Naive thymus-derived CD4-positive, alpha-beta T cell (primary cell): ENCODE measurements at regions of chr14 and their contacts with region 1.

Region 1: DNA sequence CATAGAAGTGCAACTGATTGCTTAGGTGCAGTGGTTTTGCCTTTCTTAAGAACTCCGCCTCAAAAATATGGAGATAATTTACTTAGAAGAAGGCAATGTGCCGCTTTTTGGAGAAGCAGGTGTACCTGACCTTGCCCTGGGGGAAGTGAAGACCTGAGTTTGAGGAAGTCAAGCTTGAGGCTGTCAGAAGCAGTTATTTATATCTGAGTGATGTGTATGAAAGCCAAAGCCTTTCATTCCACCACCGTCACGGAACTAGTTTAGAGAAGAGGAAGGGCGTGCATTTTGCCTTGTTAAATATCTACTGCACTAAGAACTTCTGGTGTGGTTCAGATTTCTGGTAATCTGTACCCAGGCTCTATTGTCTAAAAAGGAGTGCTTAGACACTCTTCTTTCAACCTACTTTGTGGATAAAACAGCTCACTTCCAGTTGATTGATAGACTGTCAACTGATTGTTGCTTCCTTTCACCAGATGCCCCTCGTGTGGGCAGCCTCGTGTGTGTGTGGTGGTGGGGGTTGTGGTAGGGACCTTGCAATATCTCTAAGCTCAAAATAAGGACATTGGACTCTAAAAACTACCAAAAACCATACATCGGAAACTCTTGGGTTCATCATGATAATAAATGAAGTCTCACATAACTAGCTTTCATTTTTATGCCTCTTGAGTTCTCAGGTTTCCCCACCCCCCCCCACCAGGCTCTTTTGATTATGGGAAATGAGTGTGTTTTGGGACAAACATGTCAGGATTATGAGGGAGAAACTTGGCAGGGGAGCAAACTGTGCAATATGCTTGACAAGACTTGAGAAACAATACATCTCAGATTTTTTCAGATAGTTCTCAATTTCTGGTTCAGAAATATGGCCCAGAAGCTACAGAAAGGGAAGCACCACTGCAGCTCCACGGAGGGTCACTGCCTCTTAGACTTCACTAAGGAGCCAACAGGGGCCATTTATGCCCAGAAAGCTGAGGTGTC is 78.6 kb downstream of the ARF6 start:
- DNase-seq: peak in 8 of 9 donors; percentile 59 to 94 (median 90)
- ATAC-seq: peak; percentile 92
- H3K4me3 ChIP-seq: peak overlapping the region; percentile 40
- H3K4me3 Mint-ChIP-seq: peak overlapping the region; percentile 75 to 96 (median 86)
- H3K27ac ChIP-seq: peak overlapping the region; percentile 74
- H3K27ac Mint-ChIP-seq: peak overlapping the region; percentile 96 to 99 (median 99)
- H3K4me1 ChIP-seq: peaks cover 35 to 49% of the 10 kb centered on the region in 2 donors
- H3K4me1 Mint-ChIP-seq: peaks cover 32 to 88% (median 63%) of the 10 kb centered on the region in 7 donors
- H3K27me3 ChIP-seq: no peaks in the 10 kb centered on the region
- H3K27me3 Mint-ChIP-seq: no peaks in the 10 kb centered on the region

Region 2: GRCh38 chr14:49677643-49678042 is 293.8 kb before region 1 on chr14:
- CTCF ChIA-PET with region 1: no interaction called
- POLR2A ChIA-PET with region 1: no interaction called
- intact Hi-C with region 1: no loop called
- DNase-seq: no peak
- ATAC-seq: peak; percentile 38
- H3K4me3 ChIP-seq: no peak overlapping the region
- H3K4me3 Mint-ChIP-seq: no peak overlapping the region
- H3K27ac ChIP-seq: no peak overlapping the region
- H3K27ac Mint-ChIP-seq: no peak overlapping the region
- H3K4me1 ChIP-seq: no peaks in the 10 kb centered on the region
- H3K4me1 Mint-ChIP-seq: peaks cover 0 to 12% (median 0%) of the 10 kb centered on the region in 7 donors
- H3K27me3 ChIP-seq: no peaks in the 10 kb centered on the region
- H3K27me3 Mint-ChIP-seq: no peaks in the 10 kb centered on the region

Region 3: DNA sequence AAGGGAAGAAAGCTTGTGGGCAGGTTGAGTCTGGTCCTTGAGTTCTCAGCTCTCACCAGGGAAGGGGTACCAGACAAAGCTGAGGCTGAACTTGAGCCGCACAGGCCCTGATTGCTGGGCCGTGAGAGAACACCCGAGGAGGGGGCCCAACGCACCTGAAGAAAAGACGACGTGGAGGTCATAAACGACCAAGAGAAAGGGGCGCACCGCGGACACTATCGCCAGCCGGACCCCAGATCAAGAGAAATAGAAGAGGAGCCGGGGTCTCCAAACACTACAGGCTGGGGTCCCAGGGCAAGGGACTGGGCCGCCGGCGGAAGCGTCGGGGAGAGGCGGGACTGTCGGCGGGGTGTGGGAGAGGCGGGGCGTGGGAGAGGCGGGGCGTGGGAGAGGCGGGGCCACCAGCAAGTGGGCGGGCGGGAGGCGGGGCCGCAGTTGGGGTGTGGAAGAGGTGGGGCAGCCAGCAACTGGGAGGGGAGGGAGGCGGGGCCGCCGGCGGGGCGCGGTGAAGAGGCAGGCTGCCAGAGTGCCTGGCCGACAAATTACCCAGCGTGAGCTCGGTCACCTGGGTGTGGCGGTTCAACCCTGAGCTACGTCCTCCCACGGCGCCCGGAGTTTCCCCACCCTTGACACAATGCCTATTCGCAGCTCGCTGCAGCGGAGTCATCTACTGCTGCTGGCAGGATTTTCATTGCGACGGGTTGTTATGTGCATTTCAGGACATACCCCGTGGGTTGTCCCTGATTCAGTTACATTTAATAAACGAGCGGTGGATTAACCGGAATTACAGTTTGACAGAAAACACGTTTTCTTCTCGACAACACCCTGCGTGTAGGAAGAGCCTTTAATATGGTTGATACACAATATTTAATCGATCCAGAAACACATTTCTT is 103.4 kb before region 1 on chr14:
- CTCF ChIA-PET with region 1: interaction called, 19 read pairs
- POLR2A ChIA-PET with region 1: interaction called, 87 read pairs
- intact Hi-C with region 1: loop called in 1 of 2 experiments (anchors 1 kb)
- DNase-seq: peak; percentile 87 to 97 (median 93)
- ATAC-seq: peak; percentile 96
- H3K4me3 ChIP-seq: peak overlapping the region; percentile 75
- H3K4me3 Mint-ChIP-seq: peak overlapping the region; percentile 79 to 95 (median 90)
- H3K27ac ChIP-seq: peak overlapping the region; percentile 91
- H3K27ac Mint-ChIP-seq: peak overlapping the region; percentile 93 to 99 (median 97)
- H3K4me1 ChIP-seq: peaks cover 31 to 35% of the 10 kb centered on the region in 2 donors
- H3K4me1 Mint-ChIP-seq: peaks cover 9 to 31% (median 17%) of the 10 kb centered on the region in 7 donors
- H3K27me3 ChIP-seq: no peaks in the 10 kb centered on the region
- H3K27me3 Mint-ChIP-seq: no peaks in the 10 kb centered on the region

Region 4: GRCh38 chr14:49926803-49927202 is 44.6 kb before region 1 on chr14:
- CTCF ChIA-PET with region 1: no interaction called
- POLR2A ChIA-PET with region 1: interaction called, 10 read pairs
- intact Hi-C with region 1: no loop called
- DNase-seq: no peak
- ATAC-seq: no peak
- H3K4me3 ChIP-seq: no peak overlapping the region
- H3K4me3 Mint-ChIP-seq: no peak overlapping the region
- H3K27ac ChIP-seq: no peak overlapping the region
- H3K27ac Mint-ChIP-seq: no peak overlapping the region
- H3K4me1 ChIP-seq: no peaks in the 10 kb centered on the region
- H3K4me1 Mint-ChIP-seq: peaks cover 0 to 16% (median 8%) of the 10 kb centered on the region in 7 donors
- H3K27me3 ChIP-seq: no peaks in the 10 kb centered on the region
- H3K27me3 Mint-ChIP-seq: no peaks in the 10 kb centered on the region

Region 5: DNA sequence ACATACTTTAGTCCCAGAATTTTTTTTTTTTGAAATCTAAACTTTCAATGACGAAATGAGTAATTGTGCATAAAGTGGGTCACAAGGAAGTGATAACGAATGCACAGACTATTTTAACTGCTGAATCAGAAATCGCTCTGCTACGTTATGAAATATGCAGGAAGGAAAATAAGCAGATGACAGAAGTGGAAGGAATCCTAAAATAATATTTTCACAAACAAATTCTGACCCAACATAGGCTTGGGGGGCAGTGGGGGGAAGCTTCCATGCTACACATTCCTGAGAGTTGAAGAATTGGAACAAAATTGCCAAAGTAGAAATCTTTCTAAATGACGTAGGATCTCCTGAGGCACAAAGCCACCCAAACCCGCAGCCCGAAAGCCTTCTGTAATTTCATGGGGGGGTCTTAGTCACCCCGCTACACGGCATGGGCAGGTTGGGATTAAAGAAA is 11.1 kb after region 1 on chr14:
- CTCF ChIA-PET with region 1: interaction called, 3 read pairs
- POLR2A ChIA-PET with region 1: interaction called, 31 read pairs
- intact Hi-C with region 1: no loop called
- DNase-seq: no peak
- ATAC-seq: peak; percentile 26
- H3K4me3 ChIP-seq: no peak overlapping the region
- H3K4me3 Mint-ChIP-seq: peak overlapping the region in 4 of 10 donors; percentile 13 to 58 (median 20)
- H3K27ac ChIP-seq: no peak overlapping the region
- H3K27ac Mint-ChIP-seq: peak overlapping the region in 7 of 9 donors; percentile 18 to 99 (median 79)
- H3K4me1 ChIP-seq: peaks cover 19 to 39% of the 10 kb centered on the region in 2 donors
- H3K4me1 Mint-ChIP-seq: peaks cover 43 to 78% (median 68%) of the 10 kb centered on the region in 7 donors
- H3K27me3 ChIP-seq: no peaks in the 10 kb centered on the region
- H3K27me3 Mint-ChIP-seq: no peaks in the 10 kb centered on the region

Region 6: DNA sequence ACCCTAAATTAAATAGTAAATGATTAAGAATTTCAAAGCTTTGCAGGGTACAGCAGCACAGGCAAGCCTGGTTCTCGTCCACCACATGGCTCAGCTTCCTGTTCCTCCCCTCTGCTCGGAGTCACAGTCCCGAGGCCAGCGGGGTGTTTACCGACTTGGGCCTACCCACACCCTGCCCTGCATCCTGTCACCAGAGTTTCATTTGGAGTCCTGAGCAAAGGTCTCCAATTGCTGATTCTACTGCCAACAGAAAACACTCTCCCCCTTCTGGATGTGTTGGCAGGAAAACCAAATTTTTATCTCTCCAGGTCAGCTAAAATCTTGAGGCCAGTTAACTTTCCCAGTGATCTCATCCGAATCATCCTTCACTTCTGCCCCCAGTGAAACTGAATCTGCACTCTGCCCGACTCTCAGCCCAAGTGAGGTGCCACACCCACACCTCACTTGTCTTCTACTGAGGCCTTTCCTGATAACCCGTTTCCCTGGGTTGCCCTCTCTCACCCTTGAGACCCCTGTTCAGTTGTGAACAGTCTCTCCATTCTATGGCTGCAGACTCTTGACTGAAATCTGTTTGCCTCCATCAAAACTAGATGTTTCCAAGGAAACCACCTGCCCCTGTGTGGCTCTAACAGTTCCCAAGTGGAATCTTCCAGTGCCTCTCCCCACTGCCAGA is 73.7 kb after region 1 on chr14:
- CTCF ChIA-PET with region 1: interaction called, 6 read pairs
- POLR2A ChIA-PET with region 1: interaction called, 11 read pairs
- intact Hi-C with region 1: loop called (anchors 1 kb)
- DNase-seq: peak in 8 of 9 donors; percentile 39 to 74 (median 62)
- ATAC-seq: peak; percentile 86
- H3K4me3 ChIP-seq: no peak overlapping the region
- H3K4me3 Mint-ChIP-seq: peak overlapping the region; percentile 50 to 89 (median 74)
- H3K27ac ChIP-seq: peak overlapping the region; percentile 69
- H3K27ac Mint-ChIP-seq: peak overlapping the region; percentile 88 to 99 (median 96)
- H3K4me1 ChIP-seq: peaks cover 51 to 63% of the 10 kb centered on the region in 2 donors
- H3K4me1 Mint-ChIP-seq: peaks cover 49 to 83% (median 71%) of the 10 kb centered on the region in 7 donors
- H3K27me3 ChIP-seq: no peaks in the 10 kb centered on the region
- H3K27me3 Mint-ChIP-seq: no peaks in the 10 kb centered on the region

Region 7: GRCh38 chr14:50099335-50099734 is 127.9 kb after region 1 on chr14:
- CTCF ChIA-PET with region 1: interaction called, 5 read pairs
- POLR2A ChIA-PET with region 1: interaction called, 14 read pairs
- intact Hi-C with region 1: no loop called
- DNase-seq: no peak
- ATAC-seq: no peak
- H3K4me3 ChIP-seq: no peak overlapping the region
- H3K4me3 Mint-ChIP-seq: peak overlapping the region in 9 of 10 donors; percentile 9 to 61 (median 38)
- H3K27ac ChIP-seq: no peak overlapping the region
- H3K27ac Mint-ChIP-seq: peak overlapping the region; percentile 13 to 87 (median 79)
- H3K4me1 ChIP-seq: peaks cover 23 to 67% of the 10 kb centered on the region in 2 donors
- H3K4me1 Mint-ChIP-seq: peaks cover 39 to 92% (median 76%) of the 10 kb centered on the region in 7 donors
- H3K27me3 ChIP-seq: no peaks in the 10 kb centered on the region
- H3K27me3 Mint-ChIP-seq: peaks cover 0 to 5% (median 0%) of the 10 kb centered on the region in 5 donors

Region 8: DNA sequence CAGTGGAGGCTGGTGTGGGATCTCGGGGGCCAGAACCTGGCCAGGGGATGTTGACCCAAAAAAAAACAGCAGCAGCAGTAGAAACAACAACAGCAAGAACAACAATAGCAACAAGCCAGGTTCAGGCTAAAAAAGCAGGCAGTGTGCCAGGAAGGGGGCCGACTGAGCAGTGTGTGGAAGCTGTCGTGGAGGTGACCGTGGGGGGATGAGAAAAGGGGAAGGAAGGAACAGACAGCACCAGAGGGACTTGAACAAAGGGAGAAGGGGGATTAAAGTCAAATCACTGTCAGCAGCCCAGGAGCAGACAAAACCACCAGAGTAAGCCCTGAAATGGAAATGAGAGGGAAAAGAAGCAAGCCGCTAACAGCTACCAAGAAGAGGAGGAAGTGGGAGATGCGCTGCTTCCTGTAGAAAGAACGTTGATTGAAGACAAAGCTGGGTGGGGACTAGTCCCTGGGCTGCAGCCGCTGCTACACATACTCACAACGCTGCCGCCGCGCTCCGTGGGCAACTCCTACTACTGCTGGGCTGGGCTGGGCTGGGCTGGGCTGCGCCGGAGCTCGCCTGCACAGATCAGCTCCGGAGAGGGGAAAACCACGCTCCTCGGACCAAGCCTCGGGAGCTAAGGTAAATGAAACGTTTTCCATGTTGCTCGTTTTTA is 1888.9 kb after region 1 on chr14 and contains the start of gene GNG2:
- CTCF ChIA-PET with region 1: no interaction called
- POLR2A ChIA-PET with region 1: no interaction called
- intact Hi-C with region 1: loop called in 1 of 2 experiments (anchors 5 kb)
- DNase-seq: peak; percentile 62 to 87 (median 84)
- ATAC-seq: peak; percentile 98
- H3K4me3 ChIP-seq: peak within 1 kb of the TSS; percentile 65
- H3K4me3 Mint-ChIP-seq: peak within 1 kb of the TSS; percentile 89 to 99 (median 96)
- H3K27ac ChIP-seq: peak within 1 kb of the TSS; percentile 90
- H3K27ac Mint-ChIP-seq: peak within 1 kb of the TSS; percentile 88 to 99 (median 96)
- H3K4me1 ChIP-seq: peaks cover 28 to 45% of the 10 kb centered on the region in 2 donors
- H3K4me1 Mint-ChIP-seq: peaks cover 43 to 78% (median 65%) of the 10 kb centered on the region in 7 donors
- H3K27me3 ChIP-seq: no peaks in the 10 kb centered on the region
- H3K27me3 Mint-ChIP-seq: no peaks in the 10 kb centered on the region
- total RNA-seq, gene GNG2: 62.1 to 199 (median 106) TPM